Kidney (tissue), 22 donors: ENCODE measurements at regions of chr13 and their contacts with region 1.

Region 1: DNA sequence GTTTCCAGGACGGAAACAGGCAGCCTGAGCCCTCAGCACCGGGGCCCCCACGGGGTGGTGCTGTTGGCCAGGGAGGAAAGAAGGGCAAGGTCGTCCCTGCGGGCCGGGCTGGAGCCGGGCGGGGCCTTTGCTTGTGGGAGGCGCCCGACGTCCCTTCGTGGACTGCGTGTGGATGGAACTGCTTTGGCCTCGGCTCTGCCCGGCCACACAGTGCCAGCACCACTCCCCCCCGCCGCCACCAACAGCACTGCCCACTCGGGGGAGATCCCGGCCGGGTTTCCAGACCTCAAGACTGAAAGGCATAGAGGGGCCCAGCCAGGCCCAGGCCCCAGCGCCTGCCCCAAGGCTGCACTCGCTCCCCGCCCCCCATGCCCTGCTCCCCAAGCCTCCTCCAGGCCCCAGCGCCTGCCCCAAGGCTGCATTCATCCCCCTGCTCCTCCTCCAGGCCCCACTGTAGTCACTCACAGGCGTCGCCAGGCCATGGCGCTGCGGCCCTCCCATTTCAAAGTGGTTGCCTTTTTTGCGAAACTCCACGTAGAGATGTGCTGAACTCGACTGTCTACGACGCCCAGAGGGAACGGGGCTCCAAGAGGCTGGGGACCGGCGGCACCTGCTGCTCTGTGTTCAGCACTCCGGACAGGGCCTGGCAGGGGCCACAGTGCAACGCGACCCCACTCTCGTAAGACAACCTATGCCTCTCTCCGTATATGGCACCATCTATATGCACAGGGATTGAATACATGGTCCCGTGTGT is 22.5 kb downstream of the C13orf46 start:
- DNase-seq: peak; percentile 67 to 95 (median 76)
- H3K4me3 ChIP-seq: no peak overlapping the region
- H3K27ac ChIP-seq: no peak overlapping the region
- H3K4me1 ChIP-seq: no peaks in the 10 kb centered on the region
- H3K27me3 ChIP-seq: no peaks in the 10 kb centered on the region
- CTCF ChIP-seq: peak; percentile 60

Region 2: DNA sequence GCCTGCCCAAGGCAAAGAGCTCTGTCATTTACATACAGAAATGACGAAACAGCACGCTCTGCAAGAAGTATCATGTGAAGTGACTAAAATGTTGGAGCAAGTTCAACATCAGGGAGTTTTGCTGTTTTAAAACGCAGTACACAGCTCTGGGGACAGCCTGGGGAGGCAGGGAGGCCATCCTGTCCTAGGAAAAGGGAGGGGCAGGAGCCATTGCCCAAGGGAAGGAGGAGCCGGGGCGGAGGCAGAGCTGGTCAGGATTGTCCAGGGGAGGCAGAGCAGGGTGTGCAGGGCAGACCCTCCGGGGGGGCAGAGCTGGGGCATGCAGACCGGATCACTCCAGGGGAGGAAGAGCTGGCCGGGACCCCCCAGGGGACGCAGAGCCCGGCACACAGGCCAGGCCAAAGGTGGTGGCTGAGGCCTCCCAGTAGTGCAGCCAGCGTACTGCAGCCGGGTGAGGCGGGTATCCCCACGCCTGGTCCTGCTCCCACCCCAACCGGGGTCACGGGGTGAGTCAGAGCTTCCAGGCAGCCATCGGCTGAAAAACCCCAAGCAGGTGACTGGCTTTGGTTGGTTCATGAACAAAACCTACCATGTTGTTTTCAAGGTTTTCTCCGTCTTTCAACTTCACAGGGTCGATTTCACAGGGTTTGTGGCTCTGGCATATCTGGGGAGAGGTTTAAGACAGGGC is 64.3 kb after region 1 on chr13:
- intact Hi-C with region 1: no loop called
- DNase-seq: no peak
- H3K4me3 ChIP-seq: no peak overlapping the region
- H3K27ac ChIP-seq: no peak overlapping the region
- H3K4me1 ChIP-seq: peaks cover 0 to 3% (median 0%) of the 10 kb centered on the region in 3 donors
- H3K27me3 ChIP-seq: no peaks in the 10 kb centered on the region
- CTCF ChIP-seq: no peak

Region 3: GRCh38 chr13:114222461-114222968 is 271.1 kb after region 1 on chr13:
- intact Hi-C with region 1: loop called (anchors 5 kb)
- DNase-seq: no peak
- H3K4me3 ChIP-seq: no peak overlapping the region
- H3K27ac ChIP-seq: no peak overlapping the region
- H3K4me1 ChIP-seq: peaks cover 0 to 3% (median 0%) of the 10 kb centered on the region in 3 donors
- H3K27me3 ChIP-seq: no peaks in the 10 kb centered on the region
- CTCF ChIP-seq: no peak